ENCODE measurements at regions of chr13 and their contacts with region 1.

Region 1: DNA sequence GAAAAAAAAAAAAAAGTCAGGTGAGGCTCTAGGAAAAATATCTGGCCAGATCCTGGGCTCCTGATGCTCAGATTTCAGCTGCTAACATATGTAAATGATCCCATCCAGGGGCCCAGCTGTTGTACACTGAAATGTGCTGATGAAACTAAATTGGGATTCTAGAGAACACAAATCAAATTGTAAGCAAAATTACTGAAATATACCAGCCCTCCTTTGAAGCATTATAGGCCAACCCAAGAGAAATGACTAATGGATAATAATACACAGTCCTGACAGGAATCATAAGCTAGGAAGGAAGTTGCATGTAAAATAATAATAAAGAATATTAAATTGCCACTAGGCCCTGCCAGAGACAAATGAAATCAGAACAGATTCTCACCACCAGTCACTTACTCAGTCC is 17.8 kb downstream of the KCTD12 start:
- DNase-seq: peak; percentile 69
- H3K4me3 ChIP-seq: no peak overlapping the region
- H3K27ac ChIP-seq: no peak overlapping the region
- H3K4me1 ChIP-seq: peaks cover 49% of the 10 kb centered on the region
- H3K27me3 ChIP-seq: no peaks in the 10 kb centered on the region
- CTCF ChIP-seq: no peak
- POLR2A ChIP-seq: no peak

Region 2: GRCh38 chr13:76854894-76855293 is 13.5 kb before region 1 on chr13:
- CTCF ChIA-PET with region 1: interaction called, 12 read pairs
- POLR2A ChIA-PET with region 1: no interaction called
- dilution Hi-C with region 1: no loop called
- intact Hi-C with region 1: no loop called
- DNase-seq: no peak
- H3K4me3 ChIP-seq: no peak overlapping the region
- H3K27ac ChIP-seq: no peak overlapping the region
- H3K4me1 ChIP-seq: peaks cover 29% of the 10 kb centered on the region
- H3K27me3 ChIP-seq: no peaks in the 10 kb centered on the region
- CTCF ChIP-seq: no peak
- POLR2A ChIP-seq: no peak

Region 3: DNA sequence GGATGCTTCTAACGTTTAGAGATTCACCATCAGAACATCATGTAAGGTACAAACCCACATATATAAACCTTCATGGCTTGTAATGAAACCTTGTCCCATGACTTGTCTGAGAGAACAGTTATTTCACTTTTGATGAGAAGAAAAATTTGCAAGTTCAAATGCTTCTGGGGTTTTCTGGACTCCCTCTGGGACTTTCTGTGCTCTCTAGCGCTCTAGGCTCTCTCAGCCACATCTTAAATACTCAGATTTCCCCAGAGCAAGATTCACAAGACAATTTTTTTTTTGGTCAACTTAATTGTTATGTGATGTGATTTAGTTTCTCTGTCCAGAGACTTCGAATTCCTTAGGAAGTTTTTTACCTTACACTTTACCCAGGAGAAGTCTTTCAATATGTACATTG is 1333.0 kb after region 1 on chr13:
- CTCF ChIA-PET with region 1: no interaction called
- POLR2A ChIA-PET with region 1: no interaction called
- dilution Hi-C with region 1: no loop called
- intact Hi-C with region 1: no loop called
- DNase-seq: no peak
- H3K4me3 ChIP-seq: no peak overlapping the region
- H3K27ac ChIP-seq: no peak overlapping the region
- H3K4me1 ChIP-seq: no peaks in the 10 kb centered on the region
- H3K27me3 ChIP-seq: peaks cover 2 to 3% of the 10 kb centered on the region in 2 experiments
- CTCF ChIP-seq: no peak
- POLR2A ChIP-seq: no peak

Measured in endothelial cell of umbilical vein (primary cell).